Right cardiac atrium (tissue), 5 donors: ENCODE measurements at regions of chr2 and their contacts with region 1.

Region 1: GRCh38 chr2:9843229-9844035 is at the start of gene TAF1B:
- DNase-seq: peak; percentile 90 to 94 (median 94)
- ATAC-seq: peak; percentile 97 to 98
- H3K4me3 ChIP-seq: peak within 1 kb of the TSS; percentile 72
- H3K27ac ChIP-seq: peak within 1 kb of the TSS; percentile 46
- H3K4me1 ChIP-seq: no peaks in the 10 kb centered on the region
- H3K27me3 ChIP-seq: no peaks in the 10 kb centered on the region
- total RNA-seq, gene TAF1B: 7.7 to 12.4 (median 9.4) TPM

Region 2: DNA sequence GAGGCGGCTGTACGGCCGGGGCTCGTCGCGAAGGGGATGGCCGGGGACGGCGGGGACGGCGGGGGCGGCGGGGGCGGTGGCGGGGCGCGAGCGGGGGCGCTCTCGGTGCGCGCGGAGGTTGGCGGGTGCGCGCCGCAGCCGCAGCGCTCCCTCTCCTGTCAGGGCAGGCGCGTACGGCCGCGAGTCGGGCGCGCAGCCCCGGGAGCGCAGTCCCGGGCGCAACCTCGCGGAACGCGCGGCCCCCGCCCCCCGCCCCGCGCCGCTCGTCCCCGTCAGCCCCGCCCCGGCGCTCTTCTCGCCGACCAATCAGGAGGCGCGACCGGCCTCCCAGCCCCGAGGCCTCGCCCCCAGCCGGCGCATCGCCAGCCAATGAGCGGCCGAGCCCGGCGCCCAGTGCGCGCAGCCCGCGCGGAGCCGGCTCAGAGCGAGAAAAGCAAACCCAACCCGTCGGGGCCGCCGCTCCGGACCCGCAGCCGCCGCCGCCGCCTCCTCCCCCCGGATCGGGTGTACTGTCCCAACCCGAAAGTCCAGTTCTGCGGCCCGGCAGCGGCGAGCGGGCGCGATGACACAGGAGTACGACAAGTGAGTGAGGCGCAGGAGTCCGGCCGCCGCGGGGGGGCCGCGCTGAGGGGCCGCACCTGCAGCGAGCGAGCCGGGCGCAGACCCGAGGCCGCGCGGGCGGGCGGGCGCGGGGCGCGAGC is 108.0 kb after region 1 on chr2 and contains the start of gene GRHL1:
- intact Hi-C with region 1: loop called in 1 of 4 experiments (anchors 10 kb)
- DNase-seq: peak; percentile 95 to 98 (median 98)
- ATAC-seq: peak; percentile 98
- H3K4me3 ChIP-seq: peak within 1 kb of the TSS; percentile 77
- H3K27ac ChIP-seq: peak within 1 kb of the TSS; percentile 5
- H3K4me1 ChIP-seq: no peaks in the 10 kb centered on the region
- H3K27me3 ChIP-seq: no peaks in the 10 kb centered on the region
- total RNA-seq, gene GRHL1: 2.5 to 5.7 (median 2.7) TPM

Region 3: DNA sequence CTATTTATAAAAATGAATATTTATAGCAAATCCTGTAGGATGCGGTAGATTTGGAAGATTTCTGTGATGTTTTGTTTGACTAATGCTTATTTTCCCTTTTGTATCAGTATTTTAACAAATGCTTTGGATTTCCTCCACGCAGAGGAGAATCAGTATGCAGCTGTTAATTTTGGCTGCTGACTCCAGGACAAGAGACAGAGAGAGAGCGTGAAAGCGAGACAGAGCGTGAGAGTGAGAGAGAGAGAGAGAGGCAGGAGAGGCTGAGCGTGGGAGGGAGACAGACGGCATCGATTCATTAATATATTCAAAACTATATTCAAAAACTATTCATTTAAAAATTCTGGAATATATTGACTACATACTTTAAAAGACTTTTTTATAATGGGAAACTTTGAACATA is 341.6 kb after region 1 on chr2:
- intact Hi-C with region 1: no loop called
- DNase-seq: no peak
- ATAC-seq: peak; percentile 74 to 77
- H3K4me3 ChIP-seq: no peak overlapping the region
- H3K27ac ChIP-seq: no peak overlapping the region
- H3K4me1 ChIP-seq: no peaks in the 10 kb centered on the region
- H3K27me3 ChIP-seq: no peaks in the 10 kb centered on the region